ENCODE measurements at regions of chr11 and their contacts with region 1.

Region 1: GRCh38 chr11:23540101-23540561 is 679.9 kb upstream of the CCDC179 start:
- DNase-seq: peak; percentile 49 to 50
- H3K4me3 ChIP-seq: no peak overlapping the region
- H3K27ac ChIP-seq: no peak overlapping the region
- H3K4me1 ChIP-seq: peaks cover 0 to 3% (median 0%) of the 10 kb centered on the region in 4 experiments; a peak in 2 of 7 replicates
- H3K27me3 ChIP-seq: no peaks in the 10 kb centered on the region
- CTCF ChIP-seq: peak; percentile 29 to 72 (median 62)
- EP300 ChIP-seq: no peak
- POLR2A ChIP-seq: no peak
- RAD21 ChIP-seq: peak; percentile 78 to 81

Region 2: DNA sequence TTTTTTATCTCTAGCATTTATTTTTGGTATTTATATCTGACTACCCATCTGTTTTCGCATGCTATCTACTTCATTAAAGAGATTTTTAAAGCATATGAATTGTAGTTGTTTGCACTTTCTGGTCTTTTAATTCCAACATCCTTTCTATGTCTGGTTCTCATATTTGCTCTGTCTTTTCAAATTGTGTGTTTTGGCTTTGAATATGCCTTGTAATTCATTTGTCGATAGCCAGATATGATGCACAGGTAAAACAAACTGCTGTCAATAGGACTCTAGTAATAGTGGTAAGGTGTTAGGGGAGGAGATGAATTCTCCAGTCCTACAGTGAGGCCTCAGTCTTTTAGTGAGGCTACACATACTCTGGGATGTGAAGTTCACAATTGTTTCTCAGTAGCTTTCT is 149.1 kb before region 1 on chr11:
- CTCF ChIA-PET with region 1: no interaction called
- POLR2A ChIA-PET with region 1: no interaction called
- DNase-seq: no peak
- H3K4me3 ChIP-seq: no peak overlapping the region
- H3K27ac ChIP-seq: no peak overlapping the region
- H3K4me1 ChIP-seq: no peaks in the 10 kb centered on the region
- H3K27me3 ChIP-seq: no peaks in the 10 kb centered on the region
- CTCF ChIP-seq: no peak
- EP300 ChIP-seq: no peak
- POLR2A ChIP-seq: no peak
- RAD21 ChIP-seq: no peak

Region 3: DNA sequence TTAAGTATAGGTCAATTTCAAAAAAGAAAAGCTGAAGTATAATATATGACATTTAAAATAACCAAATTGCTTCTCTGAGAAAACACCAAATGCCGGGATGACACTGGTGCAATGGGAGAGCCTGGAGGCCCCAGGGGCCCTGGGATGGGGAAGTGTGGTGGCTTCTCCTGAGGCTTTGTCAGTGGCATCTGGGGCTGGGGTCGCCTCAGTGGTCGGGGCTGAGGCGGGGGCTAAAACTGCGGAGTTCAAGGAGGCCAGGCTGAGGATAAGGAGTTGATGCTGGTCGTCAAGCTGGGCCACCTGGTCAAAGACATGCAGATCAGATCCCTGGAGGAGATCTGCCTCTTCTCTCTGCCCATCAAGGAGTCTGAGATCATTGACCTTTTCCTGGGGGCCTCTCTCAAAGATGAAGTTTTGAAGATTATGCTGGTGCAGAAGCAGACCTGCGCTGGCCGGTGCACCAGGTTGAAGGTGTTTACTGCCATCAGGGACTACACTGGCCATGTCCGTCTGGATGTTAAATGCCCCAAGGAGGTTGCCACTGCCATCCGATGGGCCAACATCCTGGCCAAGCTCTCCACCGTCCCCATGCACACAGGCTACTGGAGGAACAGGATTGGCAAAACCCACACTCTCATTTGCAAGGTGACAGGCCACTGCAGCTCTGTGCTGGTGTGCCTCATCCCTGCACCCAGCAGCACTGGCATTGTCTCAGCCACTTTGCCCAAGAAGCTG is 19.7 kb before region 1 on chr11:
- CTCF ChIA-PET with region 1: interaction called, 26 read pairs
- POLR2A ChIA-PET with region 1: no interaction called
- DNase-seq: no peak
- H3K4me3 ChIP-seq: no peak overlapping the region
- H3K27ac ChIP-seq: no peak overlapping the region
- H3K4me1 ChIP-seq: no peaks in the 10 kb centered on the region
- H3K27me3 ChIP-seq: no peaks in the 10 kb centered on the region
- CTCF ChIP-seq: no peak
- EP300 ChIP-seq: no peak
- POLR2A ChIP-seq: no peak
- RAD21 ChIP-seq: no peak

Region 4: GRCh38 chr11:23554000-23554399 is 13.9 kb after region 1 on chr11:
- CTCF ChIA-PET with region 1: interaction called, 12 read pairs
- POLR2A ChIA-PET with region 1: no interaction called
- DNase-seq: no peak
- H3K4me3 ChIP-seq: no peak overlapping the region
- H3K27ac ChIP-seq: no peak overlapping the region
- H3K4me1 ChIP-seq: no peaks in the 10 kb centered on the region
- H3K27me3 ChIP-seq: peaks cover 0 to 1% (median 0%) of the 10 kb centered on the region in 4 experiments; a peak in 1 of 7 replicates
- CTCF ChIP-seq: peak in 1 of 3 experiments; percentile 25; a peak in 1 of 4 replicates
- EP300 ChIP-seq: no peak
- POLR2A ChIP-seq: no peak
- RAD21 ChIP-seq: peak; percentile 18 to 46; a peak in 2 of 4 replicates

Region 5: GRCh38 chr11:23569547-23569946 is 29.4 kb after region 1 on chr11:
- CTCF ChIA-PET with region 1: no interaction called
- POLR2A ChIA-PET with region 1: no interaction called
- DNase-seq: no peak
- H3K4me3 ChIP-seq: no peak overlapping the region
- H3K27ac ChIP-seq: no peak overlapping the region
- H3K4me1 ChIP-seq: no peaks in the 10 kb centered on the region
- H3K27me3 ChIP-seq: no peaks in the 10 kb centered on the region
- CTCF ChIP-seq: no peak
- EP300 ChIP-seq: no peak
- POLR2A ChIP-seq: no peak
- RAD21 ChIP-seq: no peak

Measured in H1 (cell line).